ENCODE measurements at regions of chr3 and their contacts with region 1.

Region 1: DNA sequence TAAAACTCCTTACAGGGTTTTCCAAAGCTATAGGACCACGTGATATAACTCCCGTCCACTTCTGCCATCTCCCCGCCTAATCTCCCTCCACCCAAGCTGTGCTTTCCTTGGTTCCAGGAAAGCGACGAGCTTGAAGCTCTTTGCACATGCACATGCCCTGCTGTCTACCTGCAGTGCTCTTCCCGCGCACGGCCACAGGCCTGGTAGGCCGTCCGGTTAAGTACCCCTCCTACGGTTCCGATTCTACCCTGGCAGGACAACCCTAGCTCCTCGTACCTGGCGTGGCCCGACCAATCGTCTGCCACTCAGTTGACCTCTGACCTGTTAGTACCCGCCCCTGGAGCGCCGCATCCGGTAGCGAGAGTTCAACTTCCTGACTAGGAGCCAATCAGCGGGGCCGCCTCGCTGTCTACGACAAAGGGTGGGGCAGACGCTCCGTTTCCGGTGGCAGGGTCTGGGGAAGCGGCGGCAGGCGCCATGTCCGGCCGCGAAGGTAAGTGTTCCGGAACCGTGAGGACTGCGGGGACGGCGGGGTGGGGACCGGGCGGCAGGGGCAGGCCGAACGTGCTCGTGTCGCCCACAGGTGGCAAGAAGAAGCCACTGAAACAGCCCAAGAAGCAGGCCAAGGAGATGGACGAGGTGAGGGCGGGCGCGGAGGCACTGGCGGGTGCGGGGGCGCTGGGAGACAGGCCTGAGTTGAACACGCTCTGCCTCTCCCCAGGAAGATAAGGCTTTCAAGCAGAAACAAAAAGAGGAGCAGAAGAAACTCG is at the starts of genes CCDC51 and TMA7:
- DNase-seq: peak; percentile 77
- H3K4me3 ChIP-seq: peak within 1 kb of the TSS; percentile 91
- H3K27ac ChIP-seq: peak within 1 kb of the TSS; percentile 65
- H3K27me3 ChIP-seq: no peaks in the 10 kb centered on the region
- CTCF ChIP-seq: no peak
- polyA plus RNA-seq, gene CCDC51: 9.5 and 11.1 TPM in 2 replicates
- polyA plus RNA-seq, gene TMA7: 207 and 316 TPM in 2 replicates

Region 2: DNA sequence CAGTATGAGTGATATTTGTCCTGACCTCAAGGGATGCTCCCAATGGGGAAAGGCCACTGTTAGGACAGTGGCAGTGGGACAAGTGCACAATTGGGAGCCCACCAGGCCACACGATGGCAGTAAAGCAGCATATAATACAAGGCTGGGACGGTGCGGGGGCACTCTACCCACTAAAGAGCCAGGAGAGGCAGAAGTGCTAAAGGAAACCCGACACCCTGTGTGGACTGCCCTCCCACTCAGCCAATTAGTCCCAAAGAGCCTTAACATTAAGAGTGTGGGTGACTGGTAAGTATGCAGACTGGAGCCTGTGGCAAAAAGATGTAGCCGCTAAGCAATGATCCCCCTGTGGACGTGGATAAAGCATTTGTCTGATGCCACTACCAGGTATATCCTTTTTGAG is 207.3 kb before region 1 on chr3:
- CTCF ChIA-PET with region 1: interaction called, 27 read pairs
- POLR2A ChIA-PET with region 1: no interaction called
- DNase-seq: no peak
- H3K4me3 ChIP-seq: no peak overlapping the region
- H3K27ac ChIP-seq: no peak overlapping the region
- H3K27me3 ChIP-seq: no peaks in the 10 kb centered on the region
- CTCF ChIP-seq: peak; percentile 46

Region 3: DNA sequence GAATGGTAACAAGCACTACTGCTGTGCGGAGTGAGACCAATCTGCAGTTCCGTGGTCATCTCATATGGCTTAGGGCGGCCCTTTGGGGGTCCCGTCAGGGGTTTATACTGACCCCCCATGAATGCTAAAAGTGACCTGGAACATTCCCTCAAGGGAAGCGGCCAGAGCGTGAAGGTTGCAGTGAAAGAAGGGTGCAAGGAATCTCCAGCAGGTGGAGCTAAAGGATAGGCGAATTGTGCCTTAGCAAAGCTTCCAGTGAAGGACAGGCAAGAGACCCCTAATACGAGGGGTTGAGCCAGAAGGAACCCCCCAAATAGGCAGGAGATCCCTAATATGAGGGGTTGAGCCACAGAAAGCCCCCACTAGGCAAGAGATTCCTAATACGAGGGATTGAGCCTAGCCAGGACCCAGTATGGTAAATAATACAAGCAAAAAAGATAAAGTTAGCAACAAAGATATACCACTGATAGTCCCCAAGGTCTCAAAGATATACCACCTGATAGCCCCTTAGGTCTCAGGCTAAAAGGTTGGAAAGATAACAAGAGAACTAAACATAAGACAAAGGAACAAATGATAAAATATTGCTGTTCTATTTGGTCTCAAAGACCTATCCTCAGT is 166.3 kb before region 1 on chr3:
- CTCF ChIA-PET with region 1: interaction called, 404 read pairs
- POLR2A ChIA-PET with region 1: interaction called, 5 read pairs
- DNase-seq: peak; percentile 13
- H3K4me3 ChIP-seq: no peak overlapping the region
- H3K27ac ChIP-seq: no peak overlapping the region
- H3K27me3 ChIP-seq: no peaks in the 10 kb centered on the region
- CTCF ChIP-seq: peak; percentile 84

Region 4: DNA sequence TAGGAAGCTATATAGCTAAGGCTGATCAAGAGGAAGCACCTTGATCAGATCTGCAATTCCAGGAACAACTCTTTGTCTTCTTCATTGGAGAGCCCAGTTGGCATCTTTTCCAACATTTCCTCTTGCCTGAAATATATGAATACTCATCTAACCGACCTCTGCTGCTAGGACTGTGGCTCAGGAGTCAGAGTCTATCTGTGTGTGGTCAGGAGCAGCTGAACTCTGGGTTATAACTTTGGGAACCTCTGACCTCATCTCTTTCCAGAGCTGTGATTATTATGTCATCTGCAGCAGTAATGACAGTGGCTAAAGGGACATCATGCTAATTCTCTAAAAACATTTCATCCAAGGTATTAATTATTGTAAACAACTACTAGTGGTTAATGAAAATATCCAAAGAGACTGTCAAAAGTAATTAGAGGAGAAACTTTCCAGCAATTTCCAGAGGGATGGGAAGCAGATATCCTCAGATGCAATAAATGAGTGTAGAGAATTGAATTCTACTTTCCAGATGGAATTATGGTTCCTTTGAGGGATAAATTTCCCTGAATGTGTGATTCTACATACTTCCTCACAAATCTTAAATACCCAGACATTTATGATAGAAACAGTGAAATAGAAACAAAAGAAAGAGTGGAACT is 95.0 kb before region 1 on chr3:
- CTCF ChIA-PET with region 1: interaction called, 11 read pairs
- POLR2A ChIA-PET with region 1: no interaction called
- DNase-seq: no peak
- H3K4me3 ChIP-seq: no peak overlapping the region
- H3K27ac ChIP-seq: no peak overlapping the region
- H3K27me3 ChIP-seq: peaks cover 4% of the 10 kb centered on the region
- CTCF ChIP-seq: no peak

Region 5: DNA sequence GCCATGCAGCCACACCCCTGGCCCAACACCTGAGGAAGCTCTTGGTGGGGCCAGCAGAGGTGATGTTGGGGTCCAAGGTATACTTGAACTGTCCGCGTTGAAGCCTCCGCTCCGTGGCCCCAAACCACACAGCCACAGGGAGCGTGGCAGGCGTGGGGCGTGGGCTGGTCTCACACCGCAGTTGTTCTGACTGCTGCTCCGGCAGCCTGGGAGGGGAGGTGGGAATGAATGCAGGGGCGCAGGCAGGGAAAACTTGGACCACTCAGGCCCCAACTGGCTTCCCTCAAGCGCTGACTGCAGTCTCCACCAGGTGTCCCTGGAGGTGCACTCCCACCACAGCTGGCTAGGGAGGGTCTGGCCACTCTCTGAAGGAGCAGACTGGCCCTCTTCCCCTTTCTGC is 24.5 kb before region 1 on chr3:
- CTCF ChIA-PET with region 1: interaction called, 38 read pairs
- POLR2A ChIA-PET with region 1: no interaction called
- DNase-seq: no peak
- H3K4me3 ChIP-seq: no peak overlapping the region
- H3K27ac ChIP-seq: no peak overlapping the region
- H3K27me3 ChIP-seq: no peaks in the 10 kb centered on the region
- CTCF ChIP-seq: no peak

Region 6: GRCh38 chr3:48548729-48549705 is 109.0 kb after region 1 on chr3:
- CTCF ChIA-PET with region 1: interaction called, 20 read pairs
- POLR2A ChIA-PET with region 1: no interaction called
- DNase-seq: no peak
- H3K4me3 ChIP-seq: no peak overlapping the region
- H3K27ac ChIP-seq: no peak overlapping the region
- H3K27me3 ChIP-seq: no peaks in the 10 kb centered on the region
- CTCF ChIP-seq: peak; percentile 97

Region 7: DNA sequence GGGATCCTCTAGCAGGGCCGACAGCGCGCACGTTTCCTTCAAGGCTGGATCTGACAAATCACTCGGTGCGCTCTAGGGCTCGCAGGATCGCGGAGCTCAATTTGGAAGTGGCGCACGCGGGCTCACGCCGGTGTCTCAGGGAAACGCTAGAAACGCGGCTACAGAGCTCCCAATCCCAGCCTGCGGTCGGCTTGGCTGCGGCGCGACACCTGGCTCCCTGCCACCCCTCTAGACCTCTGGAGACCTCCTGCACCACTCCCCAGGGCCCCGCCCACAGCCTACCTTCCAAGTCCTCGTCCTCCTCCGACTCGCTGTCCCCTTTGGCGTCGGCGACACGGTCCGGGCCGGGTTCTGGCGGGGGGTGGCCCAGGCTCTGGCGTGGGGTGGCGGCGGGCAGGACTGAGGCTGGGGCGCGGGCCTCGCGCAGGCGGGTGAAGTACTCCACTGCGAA is 407.1 kb after region 1 on chr3:
- CTCF ChIA-PET with region 1: no interaction called
- POLR2A ChIA-PET with region 1: no interaction called
- DNase-seq: no peak
- H3K4me3 ChIP-seq: peak overlapping the region; percentile 88
- H3K27ac ChIP-seq: peak overlapping the region; percentile 57
- H3K27me3 ChIP-seq: no peaks in the 10 kb centered on the region
- CTCF ChIP-seq: no peak

Measured in AG04450 (cell line).